ENCODE measurements at regions of chr1 and their contacts with region 1.

Region 1: DNA sequence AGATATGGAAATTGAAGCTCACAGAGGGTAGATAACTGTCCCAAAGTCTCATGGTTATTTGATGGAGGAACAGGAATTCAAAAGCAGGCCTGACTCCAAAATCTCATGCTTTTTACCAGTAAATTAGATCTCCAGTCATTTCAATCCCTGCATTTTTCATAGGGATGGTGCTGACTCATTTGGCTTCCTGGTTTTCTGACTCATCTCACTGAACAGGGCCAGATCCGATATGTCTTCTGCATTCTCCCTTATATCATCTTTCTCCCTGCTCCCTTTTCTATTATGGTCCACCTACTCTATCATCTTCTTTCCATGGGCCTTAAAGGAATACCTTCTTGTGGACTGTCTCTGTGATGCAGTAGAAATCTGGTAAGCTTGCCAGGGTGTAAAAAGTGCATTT is 187.2 kb downstream of the FGGY start:
- DNase-seq: peak; percentile 85
- ATAC-seq: peak; percentile 67
- H3K4me3 ChIP-seq: no peak overlapping the region
- H3K27ac ChIP-seq: peak overlapping the region; percentile 55
- H3K4me1 ChIP-seq: peaks cover 55% of the 10 kb centered on the region
- H3K27me3 ChIP-seq: no peaks in the 10 kb centered on the region
- CTCF ChIP-seq: no peak

Region 2: GRCh38 chr1:59186656-59187055 is 297.4 kb before region 1 on chr1:
- CTCF ChIA-PET with region 1: no interaction called
- POLR2A ChIA-PET with region 1: no interaction called
- intact Hi-C with region 1: no loop called
- DNase-seq: no peak
- ATAC-seq: no peak
- H3K4me3 ChIP-seq: no peak overlapping the region
- H3K27ac ChIP-seq: no peak overlapping the region
- H3K4me1 ChIP-seq: no peaks in the 10 kb centered on the region
- H3K27me3 ChIP-seq: no peaks in the 10 kb centered on the region
- CTCF ChIP-seq: no peak

Region 3: GRCh38 chr1:59432531-59433439 is 51.3 kb before region 1 on chr1:
- CTCF ChIA-PET with region 1: no interaction called
- POLR2A ChIA-PET with region 1: no interaction called
- intact Hi-C with region 1: loop called (anchors 5 kb)
- DNase-seq: no peak
- ATAC-seq: no peak
- H3K4me3 ChIP-seq: no peak overlapping the region
- H3K27ac ChIP-seq: peak overlapping the region; percentile 84
- H3K4me1 ChIP-seq: peaks cover 54% of the 10 kb centered on the region
- H3K27me3 ChIP-seq: no peaks in the 10 kb centered on the region
- CTCF ChIP-seq: no peak

Region 4: DNA sequence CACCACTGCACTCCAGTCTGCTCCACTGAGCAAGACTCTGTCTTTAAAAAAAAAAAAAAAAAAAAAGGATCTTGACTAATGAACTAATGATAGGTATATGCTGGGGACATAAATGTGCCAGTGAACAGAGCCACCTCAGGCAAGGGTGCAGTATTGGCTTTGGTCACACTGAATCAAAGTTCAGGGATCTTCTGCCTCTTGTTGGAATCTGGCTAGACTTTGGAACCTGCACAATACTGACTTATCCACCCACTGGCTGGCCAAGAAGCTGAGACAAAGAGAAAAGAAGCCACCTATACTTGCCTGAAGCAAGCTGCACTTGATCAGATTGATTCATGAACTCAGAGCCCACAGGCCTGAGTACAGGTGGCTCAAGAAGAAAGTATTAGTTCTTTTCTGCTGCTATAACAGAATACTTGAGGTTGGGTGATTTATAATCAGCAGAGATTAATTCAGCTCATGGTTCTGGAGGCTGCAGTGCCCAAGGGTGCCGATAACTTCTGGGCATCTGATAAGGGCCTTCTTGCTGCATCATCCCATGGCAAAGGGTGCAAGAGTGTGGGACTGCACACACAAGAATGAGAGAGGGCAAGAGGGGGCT is 15.2 kb before region 1 on chr1:
- CTCF ChIA-PET with region 1: no interaction called
- POLR2A ChIA-PET with region 1: no interaction called
- intact Hi-C with region 1: no loop called
- DNase-seq: no peak
- ATAC-seq: no peak
- H3K4me3 ChIP-seq: no peak overlapping the region
- H3K27ac ChIP-seq: no peak overlapping the region
- H3K4me1 ChIP-seq: no peaks in the 10 kb centered on the region
- H3K27me3 ChIP-seq: no peaks in the 10 kb centered on the region
- CTCF ChIP-seq: no peak

Region 5: GRCh38 chr1:59498640-59499039 is 14.5 kb after region 1 on chr1:
- CTCF ChIA-PET with region 1: no interaction called
- POLR2A ChIA-PET with region 1: interaction called, 3 read pairs
- intact Hi-C with region 1: loop called (anchors 2 kb)
- DNase-seq: no peak
- ATAC-seq: no peak
- H3K4me3 ChIP-seq: no peak overlapping the region
- H3K27ac ChIP-seq: peak overlapping the region; percentile 58; the same call in 1 of the 2 replicates
- H3K4me1 ChIP-seq: peaks cover 22% of the 10 kb centered on the region
- H3K27me3 ChIP-seq: no peaks in the 10 kb centered on the region
- CTCF ChIP-seq: no peak

Region 6: GRCh38 chr1:59570524-59570923 is 86.4 kb after region 1 on chr1:
- CTCF ChIA-PET with region 1: no interaction called
- POLR2A ChIA-PET with region 1: no interaction called
- intact Hi-C with region 1: loop called (anchors 5 kb)
- DNase-seq: peak; percentile 60
- ATAC-seq: peak; percentile 92
- H3K4me3 ChIP-seq: no peak overlapping the region
- H3K27ac ChIP-seq: peak overlapping the region; percentile 54
- H3K4me1 ChIP-seq: peaks cover 16% of the 10 kb centered on the region
- H3K27me3 ChIP-seq: no peaks in the 10 kb centered on the region
- CTCF ChIP-seq: no peak